ENCODE measurements at regions of chr17 and their contacts with region 1.

Region 1: GRCh38 chr17:71084219-71084618 is 914.9 kb downstream of the KCNJ2 start:
- ATAC-seq: peak in 2 of 8 experiments; percentile 21 to 22
- H3K4me3 ChIP-seq: no peak overlapping the region
- H3K27ac ChIP-seq: no peak overlapping the region
- H3K4me1 ChIP-seq: no peaks in the 10 kb centered on the region

Region 2: GRCh38 chr17:70661342-70662222 is 422.6 kb before region 1 on chr17:
- in situ Hi-C with region 1: loop called in 1 of 9 experiments (anchors 25 kb)
- ATAC-seq: peak; percentile 32 to 95 (median 70)
- H3K4me3 ChIP-seq: no peak overlapping the region
- H3K27ac ChIP-seq: no peak overlapping the region
- H3K4me1 ChIP-seq: peaks cover 10% of the 10 kb centered on the region in 2 donors

Region 3: GRCh38 chr17:70767102-70767701 is 317.0 kb before region 1 on chr17:
- in situ Hi-C with region 1: loop called in 1 of 9 experiments (anchors 25 kb)
- ATAC-seq: no peak
- H3K4me3 ChIP-seq: no peak overlapping the region
- H3K27ac ChIP-seq: no peak overlapping the region
- H3K4me1 ChIP-seq: peaks cover 12 to 13% of the 10 kb centered on the region in 2 donors

Region 4: DNA sequence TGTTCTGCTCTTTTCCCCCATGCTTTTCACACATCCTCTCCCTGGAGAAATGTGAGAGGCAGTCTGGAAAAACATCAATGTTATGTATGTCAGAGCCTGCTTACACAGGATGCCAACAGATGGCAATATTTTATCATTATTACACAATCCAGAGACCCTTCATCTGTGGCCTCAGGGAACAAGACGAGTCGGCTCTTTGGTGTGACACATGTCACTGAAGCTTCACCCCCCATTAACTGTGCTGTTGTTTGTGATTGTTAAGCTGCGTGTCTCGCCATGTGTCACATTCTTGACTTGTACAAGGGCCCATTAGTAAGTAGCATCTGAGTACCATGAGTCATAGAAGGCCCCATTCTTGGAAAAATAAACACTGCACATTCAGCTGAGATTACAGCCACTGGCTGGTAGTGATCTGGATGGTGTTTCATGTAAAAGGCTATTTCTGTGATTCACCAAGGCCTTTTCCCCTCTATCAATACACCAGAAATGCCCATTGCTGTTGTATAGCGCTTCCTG is 354.5 kb after region 1 on chr17:
- in situ Hi-C with region 1: loop called in 1 of 9 experiments (anchors 25 kb)
- ATAC-seq: peak in 7 of 8 experiments; percentile 94 to 99 (median 97)
- H3K4me3 ChIP-seq: no peak overlapping the region
- H3K27ac ChIP-seq: no peak overlapping the region
- H3K4me1 ChIP-seq: peaks cover 10 to 11% of the 10 kb centered on the region in 2 donors

Measured in motor neuron (in vitro differentiated cells).